AG04450 (cell line): ENCODE measurements at regions of chr2 and their contacts with region 1.

Region 1: DNA sequence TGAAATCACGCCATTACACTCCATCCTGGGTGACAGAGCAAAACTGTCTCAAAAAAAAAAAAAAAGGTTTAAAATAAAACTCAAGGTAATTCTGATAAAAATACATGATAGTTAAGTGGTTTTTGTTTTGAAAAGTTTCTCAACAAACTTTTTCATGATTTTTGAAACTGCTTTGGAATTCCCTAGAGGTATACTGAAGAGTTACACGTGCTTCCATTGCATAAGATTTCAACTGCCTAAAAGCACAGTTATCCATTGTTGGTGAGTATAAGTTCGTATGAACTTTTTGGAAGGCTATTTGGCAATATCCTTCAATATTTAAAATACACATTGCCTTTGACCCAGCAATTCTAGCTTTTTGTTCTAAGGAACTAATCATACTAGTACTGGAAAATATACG is 74.9 kb downstream of the USP34 start:
- DNase-seq: no peak
- H3K4me3 ChIP-seq: no peak overlapping the region
- H3K27ac ChIP-seq: no peak overlapping the region
- H3K27me3 ChIP-seq: no peaks in the 10 kb centered on the region
- CTCF ChIP-seq: no peak

Region 2: GRCh38 chr2:61272421-61273070 is 123.5 kb before region 1 on chr2:
- CTCF ChIA-PET with region 1: no interaction called
- POLR2A ChIA-PET with region 1: no interaction called
- DNase-seq: no peak
- H3K4me3 ChIP-seq: no peak overlapping the region
- H3K27ac ChIP-seq: no peak overlapping the region
- H3K27me3 ChIP-seq: no peaks in the 10 kb centered on the region
- CTCF ChIP-seq: no peak

Region 3: GRCh38 chr2:61378281-61378680 is 17.7 kb before region 1 on chr2:
- CTCF ChIA-PET with region 1: interaction called, 3 read pairs
- POLR2A ChIA-PET with region 1: interaction called, 12 read pairs
- DNase-seq: no peak
- H3K4me3 ChIP-seq: no peak overlapping the region
- H3K27ac ChIP-seq: no peak overlapping the region
- H3K27me3 ChIP-seq: no peaks in the 10 kb centered on the region
- CTCF ChIP-seq: no peak

Region 4: GRCh38 chr2:61493523-61493942 is 97.5 kb after region 1 on chr2:
- CTCF ChIA-PET with region 1: no interaction called
- POLR2A ChIA-PET with region 1: no interaction called
- DNase-seq: no peak
- H3K4me3 ChIP-seq: no peak overlapping the region
- H3K27ac ChIP-seq: no peak overlapping the region
- H3K27me3 ChIP-seq: no peaks in the 10 kb centered on the region
- CTCF ChIP-seq: no peak